ENCODE measurements at regions of chr6 and their contacts with region 1.

Region 1: DNA sequence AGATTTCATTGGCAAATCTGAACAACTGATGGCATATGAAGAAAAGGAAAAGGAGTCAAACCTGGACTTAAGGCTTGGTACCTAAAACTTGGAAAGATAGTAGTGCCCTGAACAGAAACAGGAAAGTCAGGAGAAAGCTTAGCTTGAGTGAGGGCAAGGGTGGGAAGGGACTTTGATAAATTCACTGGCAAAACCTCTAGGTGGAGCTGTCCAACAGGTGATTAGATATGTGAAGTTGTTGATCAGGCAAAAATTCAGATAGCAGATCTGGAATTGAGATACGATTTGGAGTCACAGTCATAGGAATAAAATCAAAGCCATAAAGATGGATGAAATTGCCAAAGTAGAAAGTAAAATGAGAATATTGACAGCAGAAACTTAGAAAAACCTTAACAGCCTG is 16.1 kb upstream of the ZNF292 start:
- DNase-seq: peak in 6 of 9 experiments; percentile 30 to 81 (median 48)
- ATAC-seq: peak; percentile 86
- H3K4me3 ChIP-seq: no peak overlapping the region
- H3K4me3 Mint-ChIP-seq: no peak overlapping the region
- H3K27ac ChIP-seq: no peak overlapping the region
- H3K27ac Mint-ChIP-seq: no peak overlapping the region
- H3K4me1 ChIP-seq: no peaks in the 10 kb centered on the region
- H3K4me1 Mint-ChIP-seq: peaks cover 2% of the 10 kb centered on the region
- H3K27me3 ChIP-seq: no peaks in the 10 kb centered on the region
- H3K27me3 Mint-ChIP-seq: peaks cover 4% of the 10 kb centered on the region
- CTCF ChIP-seq: peak; percentile 86

Region 2: GRCh38 chr6:87230801-87231200 is 91.6 kb after region 1 on chr6:
- CTCF ChIA-PET with region 1: interaction called, 20 read pairs
- POLR2A ChIA-PET with region 1: no interaction called
- intact Hi-C with region 1: no loop called
- DNase-seq: no peak
- ATAC-seq: no peak
- H3K4me3 ChIP-seq: no peak overlapping the region
- H3K4me3 Mint-ChIP-seq: no peak overlapping the region
- H3K27ac ChIP-seq: no peak overlapping the region
- H3K27ac Mint-ChIP-seq: peak overlapping the region; percentile 16
- H3K4me1 ChIP-seq: no peaks in the 10 kb centered on the region
- H3K4me1 Mint-ChIP-seq: peaks cover 6% of the 10 kb centered on the region
- H3K27me3 ChIP-seq: no peaks in the 10 kb centered on the region
- H3K27me3 Mint-ChIP-seq: no peaks in the 10 kb centered on the region
- CTCF ChIP-seq: no peak

Region 3: GRCh38 chr6:87322304-87323212 is 183.3 kb after region 1 on chr6 and contains the start of gene SMIM8:
- CTCF ChIA-PET with region 1: no interaction called
- POLR2A ChIA-PET with region 1: no interaction called
- intact Hi-C with region 1: loop called (anchors 5 kb)
- DNase-seq: peak; percentile 66 to 90 (median 86)
- ATAC-seq: peak; percentile 99
- H3K4me3 ChIP-seq: peak within 1 kb of the TSS; percentile 72 to 86
- H3K4me3 Mint-ChIP-seq: peak within 1 kb of the TSS; percentile 94
- H3K27ac ChIP-seq: peak within 1 kb of the TSS; percentile 52 to 58
- H3K27ac Mint-ChIP-seq: peak within 1 kb of the TSS; percentile 90
- H3K4me1 ChIP-seq: peaks cover 6% of the 10 kb centered on the region
- H3K4me1 Mint-ChIP-seq: peaks cover 25% of the 10 kb centered on the region
- H3K27me3 ChIP-seq: no peaks in the 10 kb centered on the region
- H3K27me3 Mint-ChIP-seq: no peaks in the 10 kb centered on the region
- CTCF ChIP-seq: peak; percentile 99
- total RNA-seq, gene SMIM8: 4.2 TPM

Region 4: GRCh38 chr6:87407901-87408720 is 268.9 kb after region 1 on chr6 and contains the start of gene CFAP206:
- CTCF ChIA-PET with region 1: interaction called, 3 read pairs
- POLR2A ChIA-PET with region 1: no interaction called
- intact Hi-C with region 1: loop called in 1 of 2 experiments (anchors 5 kb)
- DNase-seq: peak; percentile 50 to 90 (median 77)
- ATAC-seq: peak; percentile 77
- H3K4me3 ChIP-seq: peak within 1 kb of the TSS; percentile 65 to 91
- H3K4me3 Mint-ChIP-seq: peak within 1 kb of the TSS; percentile 87
- H3K27ac ChIP-seq: peak within 1 kb of the TSS; percentile 64 to 71
- H3K27ac Mint-ChIP-seq: peak within 1 kb of the TSS; percentile 57
- H3K4me1 ChIP-seq: peaks cover 10% of the 10 kb centered on the region
- H3K4me1 Mint-ChIP-seq: peaks cover 7% of the 10 kb centered on the region
- H3K27me3 ChIP-seq: peaks cover 3 to 5% of the 10 kb centered on the region in 2 experiments
- H3K27me3 Mint-ChIP-seq: peaks cover 17% of the 10 kb centered on the region
- CTCF ChIP-seq: no peak
- total RNA-seq, gene CFAP206: not detected

Region 5: DNA sequence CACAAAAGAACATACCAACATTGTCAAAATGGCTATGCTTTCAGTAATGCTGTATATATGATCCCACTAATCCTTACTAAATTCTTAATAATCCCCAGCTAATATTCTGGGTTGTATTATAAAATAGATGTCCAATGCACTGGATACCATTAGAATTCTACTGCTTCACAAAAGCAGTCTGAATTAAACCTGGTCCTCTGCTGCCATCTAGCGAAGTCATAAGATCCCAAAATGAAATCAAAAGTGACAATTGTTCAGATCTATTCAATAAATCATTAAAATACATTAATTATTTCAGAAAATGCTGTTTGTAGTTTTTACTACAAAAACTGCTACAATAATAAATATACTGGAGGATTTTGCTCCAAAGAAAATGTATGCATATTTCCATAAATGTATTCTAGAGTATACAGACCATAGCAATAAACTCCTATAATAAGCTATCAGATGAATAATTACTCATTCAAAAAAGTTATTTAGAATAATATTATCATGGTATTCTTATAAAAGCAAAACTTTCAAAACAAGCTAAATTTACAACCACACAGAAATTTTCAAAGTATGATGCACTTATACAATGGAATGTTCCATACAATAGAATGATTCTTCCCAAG is 1731.6 kb after region 1 on chr6:
- CTCF ChIA-PET with region 1: interaction called, 3 read pairs
- POLR2A ChIA-PET with region 1: no interaction called
- intact Hi-C with region 1: loop called (anchors 5 to 10 kb)
- DNase-seq: peak in 8 of 9 experiments; percentile 7 to 72 (median 38)
- ATAC-seq: no peak
- H3K4me3 ChIP-seq: no peak overlapping the region
- H3K4me3 Mint-ChIP-seq: no peak overlapping the region
- H3K27ac ChIP-seq: no peak overlapping the region
- H3K27ac Mint-ChIP-seq: no peak overlapping the region
- H3K4me1 ChIP-seq: peaks cover 5% of the 10 kb centered on the region
- H3K4me1 Mint-ChIP-seq: peaks cover 9% of the 10 kb centered on the region
- H3K27me3 ChIP-seq: no peaks in the 10 kb centered on the region
- H3K27me3 Mint-ChIP-seq: no peaks in the 10 kb centered on the region
- CTCF ChIP-seq: peak; percentile 86

Measured in CD8-positive, alpha-beta T cell (primary cell).